Activated T-helper 1 cell treated with anti-CD3 and anti-CD28 coated beads, Interleukin-12 subunit alpha, Interleukin-12 subunit beta, Interleukin-2, Interleukin-4 antibody, amounts not matched to agents 30 ng/mL and 10 ng/mL and 1 ng/mL, durations not matched to agents 14 hours and 24 hours and 36 hours (primary cell): ENCODE measurements at regions of chr9 and their contacts with region 1.

Region 1: GRCh38 chr9:70413798-70414775 is at the start of gene KLF9:
- DNase-seq: peak; percentile 91
- H3K4me3 Mint-ChIP-seq: peak within 1 kb of the TSS; percentile 98
- H3K27ac Mint-ChIP-seq: peak within 1 kb of the TSS; percentile 100
- H3K4me1 Mint-ChIP-seq: peaks cover 42% of the 10 kb centered on the region
- H3K27me3 Mint-ChIP-seq: no peaks in the 10 kb centered on the region
- total RNA-seq, gene KLF9: 18.1 and 19.0 TPM in 2 replicates

Region 2: GRCh38 chr9:68653141-68653595 is 1760.9 kb before region 1 on chr9:
- intact Hi-C with region 1: loop called (anchors 5 kb)
- DNase-seq: peak; percentile 12
- H3K4me3 Mint-ChIP-seq: peak overlapping the region; percentile 35
- H3K27ac Mint-ChIP-seq: peak overlapping the region; percentile 88
- H3K4me1 Mint-ChIP-seq: peaks cover 52% of the 10 kb centered on the region
- H3K27me3 Mint-ChIP-seq: peaks cover 4% of the 10 kb centered on the region

Region 3: GRCh38 chr9:69759421-69760277 is 654.4 kb before region 1 on chr9 and contains the start of gene PTAR1:
- intact Hi-C with region 1: loop called (anchors 5 kb)
- DNase-seq: peak; percentile 88
- H3K4me3 Mint-ChIP-seq: peak within 1 kb of the TSS; percentile 91
- H3K27ac Mint-ChIP-seq: peak within 1 kb of the TSS; percentile 95
- H3K4me1 Mint-ChIP-seq: peaks cover 34% of the 10 kb centered on the region
- H3K27me3 Mint-ChIP-seq: peaks cover 5% of the 10 kb centered on the region
- total RNA-seq, gene PTAR1: 47.5 and 52.3 TPM in 2 replicates

Region 4: GRCh38 chr9:70340572-70340971 is 73.5 kb before region 1 on chr9:
- intact Hi-C with region 1: loop called (anchors 1 kb)
- DNase-seq: no peak
- H3K4me3 Mint-ChIP-seq: no peak overlapping the region
- H3K27ac Mint-ChIP-seq: no peak overlapping the region
- H3K4me1 Mint-ChIP-seq: peaks cover 8% of the 10 kb centered on the region
- H3K27me3 Mint-ChIP-seq: no peaks in the 10 kb centered on the region

Region 5: GRCh38 chr9:70451765-70452164 is 37.7 kb after region 1 on chr9:
- intact Hi-C with region 1: no loop called
- DNase-seq: no peak
- H3K4me3 Mint-ChIP-seq: no peak overlapping the region
- H3K27ac Mint-ChIP-seq: no peak overlapping the region
- H3K4me1 Mint-ChIP-seq: no peaks in the 10 kb centered on the region
- H3K27me3 Mint-ChIP-seq: peaks cover 7% of the 10 kb centered on the region

Region 6: GRCh38 chr9:70563431-70564204 is 149.5 kb after region 1 on chr9:
- intact Hi-C with region 1: loop called (anchors 1 kb)
- DNase-seq: peak; percentile 70
- H3K4me3 Mint-ChIP-seq: peak overlapping the region; percentile 69
- H3K27ac Mint-ChIP-seq: peak overlapping the region; percentile 89
- H3K4me1 Mint-ChIP-seq: peaks cover 72% of the 10 kb centered on the region
- H3K27me3 Mint-ChIP-seq: peaks cover 2% of the 10 kb centered on the region

Region 7: GRCh38 chr9:71783120-71783530 is 1369.0 kb after region 1 on chr9:
- intact Hi-C with region 1: loop called (anchors 5 kb)
- DNase-seq: peak; percentile 80
- H3K4me3 Mint-ChIP-seq: peak overlapping the region; percentile 63
- H3K27ac Mint-ChIP-seq: peak overlapping the region; percentile 93
- H3K4me1 Mint-ChIP-seq: peaks cover 42% of the 10 kb centered on the region
- H3K27me3 Mint-ChIP-seq: peaks cover 2% of the 10 kb centered on the region